ENCODE measurements at regions of chr3 and their contacts with region 1.

Region 1: GRCh38 chr3:192923731-192924130 is 6.1 kb upstream of the MB21D2 start:
- DNase-seq: no peak
- H3K4me3 ChIP-seq: no peak overlapping the region
- H3K27ac ChIP-seq: no peak overlapping the region
- H3K4me1 ChIP-seq: no peaks in the 10 kb centered on the region
- CTCF ChIP-seq: no peak

Region 2: DNA sequence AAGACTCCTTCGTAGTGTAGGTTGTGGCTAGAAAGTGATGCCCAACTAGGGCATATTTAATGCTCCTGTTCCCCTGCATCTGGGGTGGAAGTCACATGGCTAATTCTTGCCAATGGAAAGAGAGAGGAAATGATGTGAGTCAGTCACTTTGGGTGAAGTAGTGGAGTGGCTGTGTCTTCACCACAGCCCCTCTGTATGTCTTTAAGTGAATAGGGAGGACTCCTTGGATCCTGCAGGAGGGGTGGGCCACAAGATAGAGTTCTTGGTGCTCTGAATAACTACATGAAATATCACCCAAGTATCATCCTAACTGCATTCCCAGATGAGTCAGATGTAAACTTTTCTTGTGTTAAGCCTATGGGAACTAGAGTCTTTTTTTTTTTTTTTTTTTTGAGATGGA is 11.7 kb after region 1 on chr3:
- CTCF ChIA-PET with region 1: no interaction called
- POLR2A ChIA-PET with region 1: interaction called, 11 read pairs
- intact Hi-C with region 1: no loop called
- DNase-seq: no peak
- H3K4me3 ChIP-seq: no peak overlapping the region
- H3K27ac ChIP-seq: no peak overlapping the region
- H3K4me1 ChIP-seq: no peaks in the 10 kb centered on the region
- CTCF ChIP-seq: no peak